ENCODE measurements at regions of chr6 and their contacts with region 1.

Region 1: GRCh38 chr6:150004783-150005717 is 20.3 kb downstream of the RAET1L start:
- DNase-seq: peak; percentile 86 to 94
- ATAC-seq: peak; percentile 81 to 92 (median 87)
- H3K4me3 ChIP-seq: peak overlapping the region; percentile 71
- H3K4me3 Mint-ChIP-seq: peak overlapping the region; percentile 90
- H3K27ac ChIP-seq: peak overlapping the region; percentile 80
- H3K27ac Mint-ChIP-seq: peak overlapping the region; percentile 80 to 95
- H3K4me1 ChIP-seq: peaks cover 51% of the 10 kb centered on the region
- H3K4me1 Mint-ChIP-seq: peaks cover 25 to 49% of the 10 kb centered on the region in 2 donors
- H3K27me3 ChIP-seq: peaks cover 12% of the 10 kb centered on the region
- H3K27me3 Mint-ChIP-seq: peaks cover 14 to 19% of the 10 kb centered on the region in 2 donors
- CTCF ChIP-seq: no peak

Region 2: GRCh38 chr6:149840345-149841075 is 164.5 kb before region 1 on chr6:
- intact Hi-C with region 1: no loop called
- DNase-seq: peak in 1 of 2 donors; percentile 49
- ATAC-seq: peak in 2 of 3 donors; percentile 38 to 46
- H3K4me3 ChIP-seq: no peak overlapping the region
- H3K4me3 Mint-ChIP-seq: no peak overlapping the region
- H3K27ac ChIP-seq: no peak overlapping the region
- H3K27ac Mint-ChIP-seq: no peak overlapping the region
- H3K4me1 ChIP-seq: no peaks in the 10 kb centered on the region
- H3K4me1 Mint-ChIP-seq: no peaks in the 10 kb centered on the region
- H3K27me3 ChIP-seq: no peaks in the 10 kb centered on the region
- H3K27me3 Mint-ChIP-seq: peaks cover 10 to 16% of the 10 kb centered on the region in 2 donors
- CTCF ChIP-seq: no peak

Region 3: DNA sequence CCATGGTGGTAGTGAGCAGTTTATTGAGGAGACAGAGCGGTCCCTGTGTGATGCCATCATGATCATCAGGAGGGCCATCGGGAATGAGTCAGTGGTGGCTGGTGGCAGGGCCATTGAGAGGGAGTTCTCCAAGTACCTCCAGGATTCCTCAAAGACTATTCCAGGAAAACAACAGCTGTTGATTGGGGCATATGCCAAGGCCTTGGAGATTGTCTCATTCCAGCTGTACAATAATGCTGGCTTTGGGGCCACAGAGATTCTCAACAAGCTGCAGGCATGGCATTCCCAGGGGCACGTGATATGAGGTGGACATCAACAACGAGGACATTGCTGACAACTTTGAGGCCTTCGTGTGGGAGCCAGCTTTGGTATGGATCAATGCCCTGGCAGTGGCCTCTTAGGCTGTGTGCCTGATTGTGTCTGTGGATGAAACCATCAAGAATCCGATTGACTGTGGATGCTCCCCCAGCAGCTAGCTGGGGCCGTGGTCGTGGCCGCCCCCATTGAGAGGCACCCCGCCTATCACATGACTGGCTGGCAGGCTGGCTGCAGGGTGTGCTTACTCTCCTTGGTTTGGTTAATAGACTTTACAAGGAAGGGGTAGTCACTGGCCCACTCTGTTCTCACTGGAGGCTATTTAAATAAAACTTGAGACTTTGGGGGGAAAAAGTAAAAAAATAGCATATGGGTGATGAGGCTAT is 123.8 kb before region 1 on chr6:
- intact Hi-C with region 1: no loop called
- DNase-seq: no peak
- ATAC-seq: no peak
- H3K4me3 ChIP-seq: no peak overlapping the region
- H3K4me3 Mint-ChIP-seq: no peak overlapping the region
- H3K27ac ChIP-seq: no peak overlapping the region
- H3K27ac Mint-ChIP-seq: no peak overlapping the region
- H3K4me1 ChIP-seq: no peaks in the 10 kb centered on the region
- H3K4me1 Mint-ChIP-seq: no peaks in the 10 kb centered on the region
- H3K27me3 ChIP-seq: no peaks in the 10 kb centered on the region
- H3K27me3 Mint-ChIP-seq: peaks cover 21 to 54% of the 10 kb centered on the region in 2 donors
- CTCF ChIP-seq: no peak

Region 4: GRCh38 chr6:149963462-149964307 is 41.4 kb before region 1 on chr6 and contains the start of gene ULBP1:
- intact Hi-C with region 1: loop called (anchors 5 kb)
- DNase-seq: peak; percentile 59 to 83
- ATAC-seq: peak; percentile 68 to 78 (median 74)
- H3K4me3 ChIP-seq: peak within 1 kb of the TSS; percentile 52
- H3K4me3 Mint-ChIP-seq: peak within 1 kb of the TSS; percentile 96
- H3K27ac ChIP-seq: no peak within 1 kb of the TSS
- H3K27ac Mint-ChIP-seq: peak within 1 kb of the TSS; percentile 66 to 86
- H3K4me1 ChIP-seq: peaks cover 27% of the 10 kb centered on the region
- H3K4me1 Mint-ChIP-seq: peaks cover 24 to 32% of the 10 kb centered on the region in 2 donors
- H3K27me3 ChIP-seq: peaks cover 44% of the 10 kb centered on the region
- H3K27me3 Mint-ChIP-seq: peaks cover 72 to 90% of the 10 kb centered on the region in 2 donors
- CTCF ChIP-seq: no peak
- total RNA-seq, gene ULBP1: 0.18 to 0.23 TPM in 2 of 3 donors, not detected in the other

Region 5: DNA sequence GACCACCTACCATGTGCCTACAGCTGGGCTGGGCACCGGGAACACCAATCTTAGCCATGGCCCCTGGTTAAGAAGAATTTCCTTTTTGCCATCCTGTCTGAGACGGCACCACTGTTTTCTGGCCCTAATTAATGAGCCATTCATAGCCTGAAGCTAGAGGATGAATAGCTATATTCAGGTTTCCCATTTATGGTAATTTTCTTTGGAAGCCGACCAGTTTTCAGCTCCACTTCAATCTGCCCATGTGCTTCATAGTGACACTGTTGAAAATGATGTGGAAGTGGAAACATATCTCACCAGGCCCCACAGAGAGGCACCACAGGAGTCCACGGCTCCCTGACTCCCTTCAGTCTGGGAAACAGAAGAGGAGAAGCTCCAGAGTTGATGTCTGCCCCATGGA is 86.4 kb after region 1 on chr6:
- intact Hi-C with region 1: no loop called
- DNase-seq: no peak
- ATAC-seq: no peak
- H3K4me3 ChIP-seq: no peak overlapping the region
- H3K4me3 Mint-ChIP-seq: no peak overlapping the region
- H3K27ac ChIP-seq: no peak overlapping the region
- H3K27ac Mint-ChIP-seq: no peak overlapping the region
- H3K4me1 ChIP-seq: no peaks in the 10 kb centered on the region
- H3K4me1 Mint-ChIP-seq: peaks cover 5 to 6% of the 10 kb centered on the region in 2 donors
- H3K27me3 ChIP-seq: no peaks in the 10 kb centered on the region
- H3K27me3 Mint-ChIP-seq: peaks cover 6 to 24% of the 10 kb centered on the region in 2 donors
- CTCF ChIP-seq: no peak